MCF 10A (cell line): ENCODE measurements at regions of chr19 and their contacts with region 1.

Region 1: GRCh38 chr19:44635581-44636438 is 7.9 kb upstream of the PVR start:
- DNase-seq: peak; percentile 56
- H3K4me3 Mint-ChIP-seq: no peak overlapping the region
- H3K27ac Mint-ChIP-seq: peak overlapping the region; percentile 68
- H3K4me1 Mint-ChIP-seq: peaks cover 32% of the 10 kb centered on the region
- H3K27me3 Mint-ChIP-seq: no peaks in the 10 kb centered on the region
- CTCF ChIP-seq: no peak

Region 2: GRCh38 chr19:44576843-44577565 is 58.8 kb before region 1 on chr19:
- CTCF ChIA-PET with region 1: interaction called, 10 read pairs
- POLR2A ChIA-PET with region 1: no interaction called
- intact Hi-C with region 1: no loop called
- DNase-seq: peak; percentile 78
- H3K4me3 Mint-ChIP-seq: no peak overlapping the region
- H3K27ac Mint-ChIP-seq: no peak overlapping the region
- H3K4me1 Mint-ChIP-seq: no peaks in the 10 kb centered on the region
- H3K27me3 Mint-ChIP-seq: no peaks in the 10 kb centered on the region
- CTCF ChIP-seq: peak; percentile 61

Region 3: GRCh38 chr19:44587963-44588770 is 47.6 kb before region 1 on chr19:
- CTCF ChIA-PET with region 1: interaction called, 19 read pairs
- POLR2A ChIA-PET with region 1: interaction called, 7 read pairs
- intact Hi-C with region 1: no loop called
- DNase-seq: peak; percentile 88
- H3K4me3 Mint-ChIP-seq: peak overlapping the region; percentile 21
- H3K27ac Mint-ChIP-seq: peak overlapping the region; percentile 99
- H3K4me1 Mint-ChIP-seq: peaks cover 25% of the 10 kb centered on the region
- H3K27me3 Mint-ChIP-seq: no peaks in the 10 kb centered on the region
- CTCF ChIP-seq: peak; percentile 52